ENCODE measurements at regions of chr20 and their contacts with region 1.

Region 1: GRCh38 chr20:57628047-57628961 is 8.1 kb upstream of the ZBP1 start:
- DNase-seq: peak in 7 of 9 donors; percentile 62 to 81 (median 71)
- ATAC-seq: peak; percentile 88
- H3K4me3 ChIP-seq: peak overlapping the region; percentile 49
- H3K4me3 Mint-ChIP-seq: peak overlapping the region; percentile 85 to 97 (median 91)
- H3K27ac ChIP-seq: peak overlapping the region; percentile 83
- H3K27ac Mint-ChIP-seq: peak overlapping the region; percentile 92 to 100 (median 98)
- H3K4me1 ChIP-seq: peaks cover 41 to 51% of the 10 kb centered on the region in 2 donors
- H3K4me1 Mint-ChIP-seq: peaks cover 38 to 94% (median 80%) of the 10 kb centered on the region in 7 donors
- H3K27me3 ChIP-seq: no peaks in the 10 kb centered on the region
- H3K27me3 Mint-ChIP-seq: peaks cover 0 to 53% (median 0%) of the 10 kb centered on the region in 5 donors

Region 2: GRCh38 chr20:57243480-57244220 is 384.7 kb before region 1 on chr20:
- CTCF ChIA-PET with region 1: no interaction called
- POLR2A ChIA-PET with region 1: no interaction called
- intact Hi-C with region 1: no loop called
- DNase-seq: no peak
- ATAC-seq: no peak
- H3K4me3 ChIP-seq: no peak overlapping the region
- H3K4me3 Mint-ChIP-seq: no peak overlapping the region
- H3K27ac ChIP-seq: no peak overlapping the region
- H3K27ac Mint-ChIP-seq: no peak overlapping the region
- H3K4me1 ChIP-seq: no peaks in the 10 kb centered on the region
- H3K4me1 Mint-ChIP-seq: no peaks in the 10 kb centered on the region
- H3K27me3 ChIP-seq: no peaks in the 10 kb centered on the region
- H3K27me3 Mint-ChIP-seq: peaks cover 0 to 32% (median 10%) of the 10 kb centered on the region in 5 donors

Region 3: GRCh38 chr20:57514273-57514751 is 114.0 kb before region 1 on chr20:
- CTCF ChIA-PET with region 1: no interaction called
- POLR2A ChIA-PET with region 1: no interaction called
- intact Hi-C with region 1: no loop called
- DNase-seq: peak in 6 of 9 donors; percentile 13 to 31 (median 23)
- ATAC-seq: peak; percentile 45
- H3K4me3 ChIP-seq: no peak overlapping the region
- H3K4me3 Mint-ChIP-seq: no peak overlapping the region
- H3K27ac ChIP-seq: no peak overlapping the region
- H3K27ac Mint-ChIP-seq: peak overlapping the region in 1 of 9 donors; percentile 27
- H3K4me1 ChIP-seq: no peaks in the 10 kb centered on the region
- H3K4me1 Mint-ChIP-seq: no peaks in the 10 kb centered on the region
- H3K27me3 ChIP-seq: peaks cover 0 to 3% of the 10 kb centered on the region in 2 donors
- H3K27me3 Mint-ChIP-seq: peaks cover 0 to 14% (median 5%) of the 10 kb centered on the region in 5 donors

Region 4: DNA sequence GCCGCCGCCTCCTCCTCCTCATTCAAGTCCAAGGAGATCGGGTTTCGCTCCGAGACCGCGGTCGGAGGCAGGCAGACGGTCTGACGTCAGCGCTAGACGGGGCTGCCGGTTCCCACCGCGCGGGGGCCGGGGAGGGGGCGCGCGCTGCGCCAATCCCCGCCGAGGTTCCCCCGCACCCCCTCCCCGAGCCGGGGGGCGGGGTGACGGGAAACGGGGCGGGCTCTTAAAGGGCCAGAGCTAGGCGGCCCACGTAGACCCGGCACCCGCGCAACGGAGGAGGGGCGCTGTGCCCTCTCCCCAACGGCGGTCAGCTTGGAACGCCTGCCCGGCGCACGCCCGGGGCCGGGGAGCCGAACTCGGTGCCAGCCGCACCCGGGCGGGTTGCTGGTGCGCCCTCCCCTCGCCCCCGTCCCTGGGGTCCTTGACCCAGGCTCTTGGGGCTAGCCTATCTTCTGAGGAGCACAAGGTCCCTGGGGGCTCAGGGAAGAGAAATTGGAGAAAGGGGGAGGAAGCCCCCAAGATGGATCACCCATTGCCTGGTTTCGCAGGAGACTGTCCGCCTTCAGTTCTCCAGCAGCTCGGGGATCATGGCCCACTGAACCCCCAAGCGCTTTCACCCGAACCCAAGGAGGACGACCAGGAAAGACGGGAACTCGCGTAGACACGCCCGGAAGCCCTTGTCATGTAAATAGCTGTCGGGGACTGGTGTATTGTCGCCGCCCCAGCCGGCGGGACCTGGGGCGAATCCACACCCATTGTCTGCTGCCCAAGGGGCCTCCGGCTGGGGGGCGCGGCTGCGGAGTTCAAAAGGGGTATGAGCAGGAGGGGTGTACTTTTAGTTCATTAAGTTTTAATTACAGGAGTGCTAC is 81.9 kb after region 1 on chr20 and contains the start of gene PMEPA1:
- CTCF ChIA-PET with region 1: no interaction called
- POLR2A ChIA-PET with region 1: interaction called, 36 read pairs
- intact Hi-C with region 1: loop called in 1 of 2 experiments (anchors 1 kb)
- DNase-seq: peak; percentile 91 to 95 (median 93)
- ATAC-seq: peak; percentile 96
- H3K4me3 ChIP-seq: peak within 1 kb of the TSS; percentile 98
- H3K4me3 Mint-ChIP-seq: peak within 1 kb of the TSS; percentile 82 to 97 (median 94)
- H3K27ac ChIP-seq: peak within 1 kb of the TSS; percentile 88
- H3K27ac Mint-ChIP-seq: peak within 1 kb of the TSS; percentile 46 to 97 (median 95)
- H3K4me1 ChIP-seq: peaks cover 11 to 23% of the 10 kb centered on the region in 2 donors
- H3K4me1 Mint-ChIP-seq: peaks cover 15 to 55% (median 44%) of the 10 kb centered on the region in 7 donors
- H3K27me3 ChIP-seq: peaks cover 0 to 7% of the 10 kb centered on the region in 2 donors
- H3K27me3 Mint-ChIP-seq: peaks cover 0 to 51% (median 0%) of the 10 kb centered on the region in 5 donors
- total RNA-seq, gene PMEPA1: 0.44 to 10.0 (median 9.0) TPM

Region 5: DNA sequence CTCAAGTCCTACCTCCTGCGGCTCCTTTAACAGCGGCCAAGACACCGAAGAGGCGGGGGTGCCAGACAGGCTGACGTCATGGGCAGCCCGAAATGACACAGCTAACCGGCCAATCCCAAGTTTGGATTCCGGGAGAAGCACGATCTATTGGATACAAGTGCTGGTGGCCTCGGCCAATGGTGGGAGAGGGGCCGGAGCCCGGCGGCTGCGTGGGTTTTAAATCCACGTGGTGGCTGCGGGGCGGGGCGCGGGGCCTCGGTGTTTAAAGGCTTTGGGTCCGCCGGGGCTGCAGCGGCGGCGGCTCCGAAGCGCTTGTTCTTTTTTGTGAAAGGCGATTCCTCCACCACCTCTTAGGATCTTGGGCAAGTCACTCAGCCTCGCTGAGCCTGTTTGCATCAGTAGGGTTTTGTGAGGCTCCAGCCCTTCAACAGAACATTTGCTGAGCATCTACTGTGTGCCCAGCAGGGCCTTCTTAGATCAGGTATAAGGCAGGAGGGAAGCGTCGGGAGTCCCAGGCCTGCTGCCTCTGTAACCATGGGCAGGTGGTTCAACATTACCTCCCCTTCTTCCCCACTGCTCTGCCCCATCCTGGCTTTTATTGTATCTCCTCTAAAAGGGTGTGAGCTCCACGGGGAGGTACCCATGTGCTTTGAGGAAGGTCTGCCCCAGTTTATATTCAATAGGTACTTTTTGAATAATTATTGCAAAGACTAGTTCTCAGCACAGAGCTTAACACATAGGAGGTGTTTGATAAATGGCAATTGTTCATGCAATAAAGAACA is 90.4 kb after region 1 on chr20:
- CTCF ChIA-PET with region 1: no interaction called
- POLR2A ChIA-PET with region 1: no interaction called
- intact Hi-C with region 1: loop called in 1 of 2 experiments (anchors 1 kb)
- DNase-seq: peak; percentile 59 to 90 (median 87)
- ATAC-seq: peak; percentile 98
- H3K4me3 ChIP-seq: peak overlapping the region; percentile 49
- H3K4me3 Mint-ChIP-seq: peak overlapping the region; percentile 53 to 79 (median 70)
- H3K27ac ChIP-seq: peak overlapping the region; percentile 52
- H3K27ac Mint-ChIP-seq: peak overlapping the region in 8 of 9 donors; percentile 41 to 81 (median 58)
- H3K4me1 ChIP-seq: peaks cover 5 to 7% of the 10 kb centered on the region in 2 donors
- H3K4me1 Mint-ChIP-seq: peaks cover 0 to 26% (median 12%) of the 10 kb centered on the region in 7 donors
- H3K27me3 ChIP-seq: no peaks in the 10 kb centered on the region
- H3K27me3 Mint-ChIP-seq: peaks cover 0 to 25% (median 0%) of the 10 kb centered on the region in 5 donors

Region 6: GRCh38 chr20:59042796-59043660 is 1414.7 kb after region 1 on chr20:
- CTCF ChIA-PET with region 1: no interaction called
- POLR2A ChIA-PET with region 1: no interaction called
- intact Hi-C with region 1: loop called in 1 of 2 experiments (anchors 5 kb)
- DNase-seq: peak; percentile 90 to 98 (median 94)
- ATAC-seq: peak; percentile 98
- H3K4me3 ChIP-seq: peak overlapping the region; percentile 76
- H3K4me3 Mint-ChIP-seq: peak overlapping the region; percentile 81 to 96 (median 90)
- H3K27ac ChIP-seq: peak overlapping the region; percentile 93
- H3K27ac Mint-ChIP-seq: peak overlapping the region; percentile 76 to 96 (median 91)
- H3K4me1 ChIP-seq: peaks cover 30 to 32% of the 10 kb centered on the region in 2 donors
- H3K4me1 Mint-ChIP-seq: peaks cover 35 to 54% (median 50%) of the 10 kb centered on the region in 7 donors
- H3K27me3 ChIP-seq: no peaks in the 10 kb centered on the region
- H3K27me3 Mint-ChIP-seq: no peaks in the 10 kb centered on the region

Measured in naive thymus-derived CD4-positive, alpha-beta T cell (primary cell).